ENCODE measurements at regions of chr9 and their contacts with region 1.

Region 1: DNA sequence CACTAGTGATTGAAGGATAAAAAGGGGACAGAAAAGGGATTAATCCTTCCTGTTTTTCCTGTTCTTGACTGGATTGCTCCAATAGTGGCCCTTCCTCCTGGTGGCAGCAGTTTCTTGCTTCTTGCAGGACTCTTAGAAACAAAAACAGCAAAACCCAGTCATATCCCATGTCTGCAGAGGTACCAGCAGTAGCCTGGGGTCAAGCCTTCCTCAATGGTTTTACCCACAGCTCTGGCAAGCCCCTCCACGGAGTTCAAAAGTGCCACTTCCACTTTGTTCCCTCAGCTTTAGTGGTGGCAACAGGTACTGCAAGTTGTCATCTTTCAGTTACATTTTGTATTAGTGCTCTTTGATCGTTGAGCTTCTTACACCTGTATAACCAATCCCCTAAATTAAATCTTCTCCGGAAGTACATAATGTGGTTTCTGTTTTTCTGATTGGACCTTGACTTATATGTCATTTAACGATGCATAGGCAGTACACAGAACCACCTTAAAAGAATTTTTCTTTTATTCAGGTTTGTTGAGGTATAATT is 8.7 kb upstream of the RANBP6 start:
- DNase-seq: peak in 1 of 2 experiments; percentile 9
- H3K4me3 ChIP-seq: no peak overlapping the region
- H3K27ac ChIP-seq: no peak overlapping the region
- H3K4me1 ChIP-seq: no peaks in the 10 kb centered on the region
- H3K27me3 ChIP-seq: no peaks in the 10 kb centered on the region
- CTCF ChIP-seq: peak; percentile 67

Region 2: DNA sequence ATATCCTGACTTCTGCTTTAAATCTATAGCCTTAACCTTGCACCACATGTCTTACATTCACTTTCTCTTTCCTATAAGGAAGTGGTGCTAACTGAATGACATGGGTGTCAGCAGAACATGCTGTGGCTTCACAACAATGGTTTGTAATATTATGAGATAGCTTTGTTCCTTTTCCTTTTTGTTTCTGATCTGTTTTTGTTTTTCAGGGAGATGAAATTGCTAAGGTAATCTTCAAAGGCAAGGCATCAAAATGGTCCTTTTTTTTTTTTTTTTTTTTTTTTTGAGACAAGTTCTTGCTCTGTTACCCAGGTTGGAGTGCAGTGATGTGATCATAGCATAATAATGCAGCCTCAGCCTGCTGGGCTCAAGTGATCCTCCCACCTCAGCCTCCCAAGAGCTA is 44.9 kb after region 1 on chr9:
- CTCF ChIA-PET with region 1: no interaction called
- POLR2A ChIA-PET with region 1: interaction called, 23 read pairs
- intact Hi-C with region 1: no loop called
- DNase-seq: no peak
- H3K4me3 ChIP-seq: no peak overlapping the region
- H3K27ac ChIP-seq: no peak overlapping the region
- H3K4me1 ChIP-seq: no peaks in the 10 kb centered on the region
- H3K27me3 ChIP-seq: no peaks in the 10 kb centered on the region
- CTCF ChIP-seq: no peak

Region 3: DNA sequence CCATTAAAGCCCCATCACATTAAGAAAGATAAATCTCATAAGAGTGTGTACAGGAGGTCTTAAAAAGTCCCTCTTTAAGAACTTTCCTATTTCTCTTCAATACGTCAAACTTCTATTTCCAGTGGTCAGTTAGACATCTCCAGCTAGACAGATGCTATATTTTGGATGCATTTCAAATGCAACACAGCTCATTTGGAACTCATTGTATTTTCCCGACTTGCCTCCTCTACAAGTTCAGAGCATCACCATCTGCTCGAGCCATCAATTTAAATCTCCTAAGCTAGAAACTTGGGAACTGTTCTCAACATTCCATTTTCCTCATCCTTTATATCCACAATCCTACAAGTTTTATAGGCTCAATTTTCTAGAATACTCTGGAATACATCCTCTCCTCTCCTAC is 385.7 kb after region 1 on chr9:
- CTCF ChIA-PET with region 1: no interaction called
- POLR2A ChIA-PET with region 1: no interaction called
- intact Hi-C with region 1: no loop called
- DNase-seq: no peak
- H3K4me3 ChIP-seq: no peak overlapping the region
- H3K27ac ChIP-seq: no peak overlapping the region
- H3K4me1 ChIP-seq: peaks cover 2% of the 10 kb centered on the region
- H3K27me3 ChIP-seq: no peaks in the 10 kb centered on the region
- CTCF ChIP-seq: no peak

Measured in PC-9 (cell line).